Head of caudate nucleus (tissue), 42 donors: ENCODE measurements at regions of chr6 and their contacts with region 1.

Region 1: GRCh38 chr6:149934249-149935156 is 7.3 kb upstream of the ULBP2 start:
- DNase-seq: peak in 33 of 42 donors; percentile 33 to 90 (median 69)

Region 2: DNA sequence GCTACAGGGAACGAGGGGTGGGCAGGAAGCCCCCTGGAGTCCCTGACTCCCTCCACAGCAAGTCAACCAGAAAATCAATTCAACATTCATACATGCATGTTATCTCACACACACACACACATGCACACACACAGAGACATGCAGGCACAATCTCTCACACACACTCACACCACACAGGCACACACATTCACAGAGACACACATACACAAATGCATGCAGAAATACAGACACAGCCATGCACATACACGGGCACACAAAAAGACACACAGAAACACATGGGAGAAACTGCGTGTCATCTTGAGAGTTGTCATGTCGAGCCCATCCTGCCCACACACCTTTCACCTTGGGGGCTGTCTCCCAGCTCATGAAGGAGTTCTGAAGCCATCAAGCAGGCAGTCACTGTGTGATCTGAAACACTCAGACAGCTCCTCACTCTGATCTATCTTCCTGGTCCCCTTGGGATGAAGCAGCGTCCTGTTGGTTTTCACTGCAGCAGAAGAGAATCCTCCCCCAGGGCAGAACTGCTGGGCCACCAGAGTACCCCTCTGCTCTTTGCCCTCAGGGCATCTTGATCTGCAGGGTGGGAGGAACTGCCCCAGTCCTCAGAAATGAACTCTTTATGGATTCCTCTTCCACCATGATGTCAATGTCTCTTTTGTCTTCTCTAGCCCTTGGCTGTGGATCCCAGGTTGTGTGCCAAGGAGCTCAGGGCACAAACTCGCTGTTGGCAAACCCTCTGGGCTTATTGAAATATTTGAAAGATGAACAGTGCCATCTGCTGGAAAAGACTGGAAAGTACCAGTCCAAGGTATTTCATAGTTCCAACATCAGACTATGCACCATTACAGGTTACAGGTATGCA is 82.1 kb after region 1 on chr6:
- intact Hi-C with region 1: loop called (anchors 2 kb)
- DNase-seq: peak; percentile 32 to 91 (median 75)

Region 3: GRCh38 chr6:150229775-150230561 is 295.5 kb after region 1 on chr6:
- intact Hi-C with region 1: no loop called
- DNase-seq: peak in 13 of 42 donors; percentile 10 to 55 (median 37)